ENCODE measurements at regions of chr1 and their contacts with region 1.

Region 1: DNA sequence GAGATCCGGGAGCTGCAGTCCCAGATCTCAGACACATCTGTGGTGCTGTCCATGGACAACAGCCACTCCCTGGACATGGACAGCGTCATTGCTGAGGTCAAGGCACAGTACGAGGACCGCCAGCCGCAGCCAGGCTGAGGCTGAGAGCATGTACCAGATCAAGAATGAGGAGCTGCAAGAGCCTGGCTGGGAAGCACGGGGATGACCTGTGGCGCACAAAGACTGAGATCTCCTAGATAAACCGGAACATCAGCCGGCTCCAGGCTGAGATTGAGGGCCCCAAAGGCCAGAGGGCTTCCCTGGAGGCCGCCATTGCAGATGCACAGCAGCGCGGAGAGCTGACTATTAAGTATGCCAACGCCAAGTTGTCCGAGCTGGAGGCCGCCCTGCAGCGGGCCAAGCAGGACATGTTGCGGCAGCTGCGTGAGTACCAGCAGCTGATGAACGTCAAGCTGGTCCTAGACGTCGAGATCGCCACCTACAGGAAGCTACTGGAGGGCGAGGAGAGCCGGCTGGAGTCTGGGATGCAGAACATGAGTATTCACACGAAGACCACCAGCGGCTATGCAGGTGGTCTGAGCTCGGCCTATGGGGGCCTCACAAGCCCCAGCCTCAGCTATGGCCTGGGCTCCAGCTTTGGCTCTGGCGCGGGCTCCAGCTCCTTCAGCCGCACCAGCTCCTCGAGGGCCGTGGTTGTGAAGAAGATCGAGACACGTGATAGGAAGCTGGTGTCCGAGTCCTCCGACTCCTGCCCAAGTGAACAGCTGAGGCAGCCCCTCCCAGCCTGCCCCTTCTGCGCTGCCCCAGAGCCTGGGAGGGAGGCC is 25.5 kb downstream of the ETV3L start:
- DNase-seq: peak; percentile 80
- ATAC-seq: peak; percentile 61

Region 2: GRCh38 chr1:156980551-156980950 is 93.6 kb before region 1 on chr1:
- intact Hi-C with region 1: loop called (anchors 5 kb)
- DNase-seq: no peak
- ATAC-seq: peak; percentile 62